Adrenal gland (tissue), 19 donors: ENCODE measurements at regions of chr15 and their contacts with region 1.

Region 1: DNA sequence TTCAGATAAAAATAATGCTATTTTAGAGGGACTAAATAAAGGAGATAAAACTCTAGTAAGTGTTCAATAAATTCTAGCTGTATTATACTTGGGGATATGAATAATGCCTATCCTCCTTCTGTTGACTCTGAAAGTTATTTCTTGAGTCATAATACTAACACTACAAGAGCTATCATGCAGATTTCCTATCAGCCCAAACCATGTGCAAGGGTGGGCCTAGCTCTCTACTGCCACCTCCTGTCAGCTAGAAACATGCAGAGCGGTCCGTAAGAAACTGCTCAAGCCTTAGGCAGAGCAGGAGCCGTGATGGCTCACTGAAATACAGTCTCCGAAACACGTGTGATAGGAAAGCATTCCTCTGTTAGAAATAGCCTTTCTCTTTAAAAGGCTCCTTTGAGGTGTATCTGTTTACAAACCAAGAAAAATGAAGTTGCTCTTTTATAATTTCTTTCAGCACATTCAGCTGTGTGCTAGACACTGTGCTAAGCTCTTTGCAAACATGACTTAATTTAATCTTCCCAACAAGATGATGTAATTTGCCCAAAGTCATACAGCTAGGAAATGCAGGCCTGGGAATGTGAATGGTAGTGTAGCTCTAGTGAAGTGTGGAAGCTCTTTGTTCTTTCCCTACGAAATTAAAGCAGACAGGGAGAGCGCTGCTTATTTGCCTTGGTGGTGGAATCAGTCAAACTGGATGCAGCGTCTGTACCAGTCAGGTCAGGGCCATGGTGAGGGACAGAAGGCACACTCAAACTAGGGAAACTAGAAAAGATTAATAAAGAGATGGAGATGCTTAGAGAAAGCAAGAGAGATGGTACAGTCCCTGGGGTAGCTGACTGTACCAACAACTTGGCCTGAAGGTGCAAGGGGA is 43.1 kb downstream of the MTHFS start:
- DNase-seq: peak; percentile 63 to 86 (median 76)
- H3K4me3 ChIP-seq: no peak overlapping the region
- H3K27ac ChIP-seq: no peak overlapping the region
- H3K4me1 ChIP-seq: peaks cover 0 to 9% of the 10 kb centered on the region in 2 donors
- H3K27me3 ChIP-seq: no peaks in the 10 kb centered on the region
- CTCF ChIP-seq: peak; percentile 83 to 96 (median 90)
- POLR2A ChIP-seq: no peak

Region 2: DNA sequence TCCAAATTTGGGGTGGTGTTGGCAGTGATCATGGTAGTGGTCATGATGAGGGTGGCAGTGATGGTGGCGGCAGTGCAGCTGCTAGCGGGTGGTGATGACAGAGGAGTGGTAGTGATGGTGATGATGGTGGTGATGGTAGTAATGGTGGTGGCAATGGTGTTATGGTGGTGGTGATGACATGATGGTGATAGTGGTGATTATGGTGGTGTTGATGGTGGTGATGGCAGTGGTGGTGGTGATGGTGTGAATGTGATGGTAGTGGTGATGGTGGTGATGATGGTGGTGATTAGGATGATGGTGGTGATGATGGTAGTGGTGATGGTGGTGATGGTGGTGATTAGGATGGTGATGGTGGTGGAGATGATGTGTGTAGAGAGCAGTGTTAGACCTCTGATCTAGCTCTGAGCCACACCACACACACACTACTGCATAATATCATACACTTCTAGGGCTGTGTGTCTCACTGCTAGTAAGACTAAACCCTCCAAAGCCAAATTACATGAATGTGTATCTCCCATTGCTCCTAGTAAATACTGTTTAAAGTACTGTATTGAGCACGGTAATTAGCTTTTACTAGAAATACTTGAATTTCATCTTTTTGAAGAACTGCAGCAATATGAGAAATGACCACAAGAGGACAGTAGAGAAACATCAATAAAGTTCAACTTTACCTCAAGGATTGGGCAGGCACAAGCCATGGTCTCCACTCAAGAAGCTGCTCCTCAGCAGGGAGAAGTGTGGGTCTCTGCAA is 514.0 kb before region 1 on chr15:
- intact Hi-C with region 1: loop called in 1 of 2 experiments (anchors 10 kb)
- DNase-seq: peak in 1 of 7 donors; percentile 16
- H3K4me3 ChIP-seq: no peak overlapping the region
- H3K27ac ChIP-seq: no peak overlapping the region
- H3K4me1 ChIP-seq: no peaks in the 10 kb centered on the region
- H3K27me3 ChIP-seq: no peaks in the 10 kb centered on the region
- CTCF ChIP-seq: peak; percentile 78 to 91 (median 85)
- POLR2A ChIP-seq: no peak

Region 3: GRCh38 chr15:79965846-79966630 is 112.3 kb after region 1 on chr15:
- intact Hi-C with region 1: no loop called
- DNase-seq: no peak
- H3K4me3 ChIP-seq: no peak overlapping the region
- H3K27ac ChIP-seq: no peak overlapping the region
- H3K4me1 ChIP-seq: peaks cover 0 to 7% of the 10 kb centered on the region in 2 donors
- H3K27me3 ChIP-seq: no peaks in the 10 kb centered on the region
- CTCF ChIP-seq: no peak
- POLR2A ChIP-seq: no peak

Region 4: DNA sequence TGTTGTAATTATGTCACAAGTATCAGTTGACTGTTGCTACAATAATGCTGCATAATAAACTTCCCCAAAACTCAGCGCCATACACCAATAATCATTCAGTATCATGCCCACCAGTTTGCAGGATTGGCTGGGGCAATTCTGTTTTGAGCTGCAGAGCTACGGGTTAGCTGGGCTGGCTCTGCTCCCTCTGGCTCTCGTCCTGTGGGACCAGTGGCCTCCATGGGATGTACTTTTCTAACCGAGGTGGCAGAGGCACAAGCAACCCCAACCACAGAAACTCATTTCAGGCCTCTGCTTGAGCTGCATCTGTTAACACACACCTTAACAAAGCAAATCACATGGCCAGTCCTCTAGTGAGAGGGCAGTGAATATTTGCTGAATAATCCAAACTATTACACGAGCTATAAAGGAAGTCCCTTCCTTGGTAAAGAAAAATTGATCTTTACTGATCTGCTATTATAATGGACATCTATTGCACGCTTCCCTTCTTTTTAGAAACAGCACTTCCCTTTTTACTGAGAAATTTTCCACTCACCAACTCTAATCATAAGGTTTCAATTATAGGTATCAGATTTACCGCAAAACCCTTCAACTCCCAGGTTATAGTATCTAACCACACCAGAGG is 128.2 kb after region 1 on chr15:
- intact Hi-C with region 1: no loop called
- DNase-seq: peak in 1 of 7 donors; percentile 47
- H3K4me3 ChIP-seq: no peak overlapping the region
- H3K27ac ChIP-seq: no peak overlapping the region
- H3K4me1 ChIP-seq: no peaks in the 10 kb centered on the region
- H3K27me3 ChIP-seq: no peaks in the 10 kb centered on the region
- CTCF ChIP-seq: no peak
- POLR2A ChIP-seq: no peak

Region 5: GRCh38 chr15:80026754-80027153 is 173.1 kb after region 1 on chr15:
- intact Hi-C with region 1: no loop called
- DNase-seq: peak in 1 of 7 donors; percentile 29
- H3K4me3 ChIP-seq: no peak overlapping the region
- H3K27ac ChIP-seq: no peak overlapping the region
- H3K4me1 ChIP-seq: no peaks in the 10 kb centered on the region
- H3K27me3 ChIP-seq: no peaks in the 10 kb centered on the region
- CTCF ChIP-seq: no peak
- POLR2A ChIP-seq: no peak

Region 6: GRCh38 chr15:80136854-80137253 is 283.2 kb after region 1 on chr15:
- intact Hi-C with region 1: no loop called
- DNase-seq: no peak
- H3K4me3 ChIP-seq: no peak overlapping the region
- H3K27ac ChIP-seq: no peak overlapping the region
- H3K4me1 ChIP-seq: no peaks in the 10 kb centered on the region
- H3K27me3 ChIP-seq: no peaks in the 10 kb centered on the region
- CTCF ChIP-seq: no peak
- POLR2A ChIP-seq: no peak